Lower lobe of right lung (tissue), 2 donors: ENCODE measurements at regions of chr14 and their contacts with region 1.

Region 1: DNA sequence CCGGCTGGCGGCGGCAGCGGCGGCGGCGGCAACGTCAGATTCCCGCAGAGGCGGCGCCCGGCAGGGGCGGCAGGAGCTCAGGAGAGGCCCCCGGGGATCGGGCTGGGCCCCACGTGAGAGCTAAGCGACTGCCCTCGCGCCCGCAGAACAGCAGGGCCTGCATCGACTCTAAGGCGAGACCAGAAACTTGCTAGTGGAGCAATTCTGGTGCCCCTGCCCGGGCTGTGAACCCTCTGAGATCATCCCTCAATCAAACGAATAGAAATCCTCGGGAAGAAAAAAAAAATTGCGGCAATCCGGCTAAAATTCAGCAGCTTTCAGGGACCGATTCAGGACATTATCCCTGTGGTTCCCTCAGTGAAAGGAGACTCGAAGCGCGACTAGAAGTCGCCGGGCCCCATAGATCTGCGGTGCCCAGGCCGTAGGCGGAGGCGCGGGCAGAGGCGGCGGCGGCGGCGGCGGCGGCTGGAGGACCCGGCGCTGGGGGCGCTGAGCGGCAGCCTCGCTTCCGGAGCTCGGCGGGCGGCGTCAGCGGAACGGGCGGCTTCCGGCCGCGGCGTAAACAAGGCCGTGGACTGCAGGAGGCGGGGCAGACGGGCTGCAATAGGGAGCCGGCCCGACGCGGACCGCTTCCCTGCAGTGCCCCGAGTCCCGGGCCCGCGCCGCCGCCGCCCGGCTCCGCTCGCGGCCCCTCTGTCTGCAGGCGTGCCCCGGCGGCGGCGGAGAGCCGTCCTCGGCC is at the start of gene KLHDC2:
- DNase-seq: peak; percentile 95
- ATAC-seq: peak; percentile 96
- H3K4me3 ChIP-seq: peak within 1 kb of the TSS; percentile 85
- H3K27ac ChIP-seq: peak within 1 kb of the TSS; percentile 97
- H3K4me1 ChIP-seq: peaks cover 32% of the 10 kb centered on the region
- H3K27me3 ChIP-seq: no peaks in the 10 kb centered on the region
- CTCF ChIP-seq: peak; percentile 39
- total RNA-seq, gene KLHDC2: 42.4 TPM

Region 2: GRCh38 chr14:49594347-49595089 is 173.2 kb before region 1 on chr14:
- intact Hi-C with region 1: no loop called
- DNase-seq: no peak
- ATAC-seq: peak; percentile 12 to 29
- H3K4me3 ChIP-seq: no peak overlapping the region
- H3K27ac ChIP-seq: peak overlapping the region; percentile 41
- H3K4me1 ChIP-seq: peaks cover 11% of the 10 kb centered on the region
- H3K27me3 ChIP-seq: no peaks in the 10 kb centered on the region
- CTCF ChIP-seq: no peak

Region 3: GRCh38 chr14:49633640-49634546 is 133.8 kb before region 1 on chr14:
- intact Hi-C with region 1: loop called (anchors 5 kb)
- DNase-seq: peak; percentile 96
- ATAC-seq: peak; percentile 96 to 98
- H3K4me3 ChIP-seq: peak overlapping the region; percentile 90
- H3K27ac ChIP-seq: peak overlapping the region; percentile 98
- H3K4me1 ChIP-seq: peaks cover 39% of the 10 kb centered on the region
- H3K27me3 ChIP-seq: no peaks in the 10 kb centered on the region
- CTCF ChIP-seq: peak; percentile 85